ENCODE measurements at regions of chr13 and their contacts with region 1.

Region 1: GRCh38 chr13:20828539-20829364 is 55.0 kb upstream of the EEF1AKMT1 start:
- DNase-seq: peak; percentile 27
- H3K4me3 ChIP-seq: peak overlapping the region; percentile 13 to 45; a peak in 3 of 4 replicates
- H3K27ac ChIP-seq: peak overlapping the region in 1 of 2 experiments; percentile 31; a peak in 1 of 4 replicates
- H3K4me1 ChIP-seq: peaks cover 0 to 29% of the 10 kb centered on the region in 2 experiments; a peak in 3 of 4 replicates
- H3K27me3 ChIP-seq: no peaks in the 10 kb centered on the region
- CTCF ChIP-seq: peak; percentile 85
- EP300 ChIP-seq: no peak
- RAD21 ChIP-seq: peak; percentile 77

Region 2: GRCh38 chr13:20495082-20496023 is 333.4 kb before region 1 on chr13:
- CTCF ChIA-PET with region 1: interaction called, 32 read pairs
- POLR2A ChIA-PET with region 1: no interaction called
- DNase-seq: peak; percentile 74
- H3K4me3 ChIP-seq: no peak overlapping the region; a peak in 1 of 4 replicates
- H3K27ac ChIP-seq: no peak overlapping the region
- H3K4me1 ChIP-seq: no peaks in the 10 kb centered on the region
- H3K27me3 ChIP-seq: no peaks in the 10 kb centered on the region
- CTCF ChIP-seq: peak; percentile 97
- EP300 ChIP-seq: no peak
- RAD21 ChIP-seq: peak; percentile 95

Region 3: DNA sequence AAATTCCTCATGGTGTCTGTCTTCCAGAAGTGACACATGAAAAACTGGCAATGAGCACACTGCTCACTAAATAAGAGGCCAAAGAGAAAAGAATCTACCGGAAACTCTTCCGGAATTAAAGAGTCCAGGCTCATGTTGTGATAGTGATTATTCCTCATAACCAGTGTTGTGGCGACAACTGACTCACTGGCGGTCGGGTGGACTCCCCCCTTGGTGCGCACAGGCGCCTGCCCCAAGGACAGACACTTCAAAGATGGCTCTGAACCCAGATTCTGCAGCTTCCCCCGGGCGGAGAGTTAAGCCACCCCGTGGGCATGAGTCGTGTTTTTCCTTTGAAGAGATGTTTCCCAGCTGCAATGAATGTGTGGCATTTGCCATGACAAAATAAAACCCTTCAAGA is 115.0 kb before region 1 on chr13:
- CTCF ChIA-PET with region 1: interaction called, 76 read pairs
- POLR2A ChIA-PET with region 1: no interaction called
- DNase-seq: no peak
- H3K4me3 ChIP-seq: no peak overlapping the region
- H3K27ac ChIP-seq: peak overlapping the region in 1 of 2 experiments; percentile 86; a peak in 3 of 4 replicates
- H3K4me1 ChIP-seq: peaks cover 0 to 27% of the 10 kb centered on the region in 2 experiments; a peak in 3 of 4 replicates
- H3K27me3 ChIP-seq: no peaks in the 10 kb centered on the region
- CTCF ChIP-seq: no peak
- EP300 ChIP-seq: no peak
- RAD21 ChIP-seq: no peak

Region 4: GRCh38 chr13:20728579-20729311 is 100.0 kb before region 1 on chr13:
- CTCF ChIA-PET with region 1: interaction called, 10 read pairs
- POLR2A ChIA-PET with region 1: no interaction called
- DNase-seq: no peak
- H3K4me3 ChIP-seq: no peak overlapping the region
- H3K27ac ChIP-seq: no peak overlapping the region
- H3K4me1 ChIP-seq: no peaks in the 10 kb centered on the region
- H3K27me3 ChIP-seq: no peaks in the 10 kb centered on the region
- CTCF ChIP-seq: no peak
- EP300 ChIP-seq: no peak
- RAD21 ChIP-seq: no peak

Region 5: DNA sequence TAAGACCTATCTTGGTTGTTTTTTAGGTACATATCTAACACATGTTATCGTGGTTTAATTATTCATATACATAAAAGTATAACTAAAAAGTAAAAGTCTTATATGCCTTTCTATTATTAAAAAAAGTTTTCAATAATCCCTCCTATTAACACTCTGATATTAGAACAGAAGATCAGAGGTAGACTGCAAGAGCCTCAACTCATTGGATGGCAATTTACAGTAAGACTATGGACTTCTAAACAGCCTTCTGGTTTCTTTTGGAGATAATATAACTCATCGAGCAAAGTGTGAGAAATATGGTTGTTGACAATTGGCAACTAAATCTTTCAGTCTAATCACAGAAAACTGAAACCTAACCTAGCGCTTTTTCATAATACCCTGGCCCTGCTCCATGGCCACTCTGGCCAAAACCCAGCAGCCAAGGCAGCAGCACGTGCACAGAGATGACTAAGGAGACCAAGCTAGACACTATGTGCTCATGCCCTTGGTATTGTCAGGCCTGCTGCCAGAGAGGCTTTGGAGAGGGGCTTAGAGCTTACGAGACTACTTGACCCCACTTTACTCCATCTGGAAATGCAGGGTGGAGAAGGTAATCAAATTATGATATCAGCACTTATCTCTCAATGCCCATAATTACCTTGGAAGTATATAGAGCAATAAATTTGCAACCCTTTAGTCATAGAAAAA is 14.4 kb before region 1 on chr13:
- CTCF ChIA-PET with region 1: interaction called, 28 read pairs
- POLR2A ChIA-PET with region 1: no interaction called
- DNase-seq: peak; percentile 58
- H3K4me3 ChIP-seq: peak overlapping the region in 1 of 2 experiments; percentile 36; a peak in 2 of 4 replicates
- H3K27ac ChIP-seq: peak overlapping the region; percentile 72 to 96
- H3K4me1 ChIP-seq: peaks cover 18 to 21% of the 10 kb centered on the region in 2 experiments
- H3K27me3 ChIP-seq: no peaks in the 10 kb centered on the region
- CTCF ChIP-seq: no peak
- EP300 ChIP-seq: peak; percentile 40 to 72; a peak in 3 of 4 replicates
- RAD21 ChIP-seq: no peak

Region 6: GRCh38 chr13:20847296-20847695 is 18.5 kb after region 1 on chr13:
- CTCF ChIA-PET with region 1: interaction called, 25 read pairs
- POLR2A ChIA-PET with region 1: no interaction called
- DNase-seq: no peak
- H3K4me3 ChIP-seq: no peak overlapping the region
- H3K27ac ChIP-seq: no peak overlapping the region
- H3K4me1 ChIP-seq: peaks cover 4 to 11% of the 10 kb centered on the region in 2 experiments; a peak in 3 of 4 replicates
- H3K27me3 ChIP-seq: no peaks in the 10 kb centered on the region
- CTCF ChIP-seq: no peak
- EP300 ChIP-seq: no peak
- RAD21 ChIP-seq: no peak

Measured in SK-N-SH (cell line).